ENCODE measurements at regions of chr20 and their contacts with region 1.

Region 1: DNA sequence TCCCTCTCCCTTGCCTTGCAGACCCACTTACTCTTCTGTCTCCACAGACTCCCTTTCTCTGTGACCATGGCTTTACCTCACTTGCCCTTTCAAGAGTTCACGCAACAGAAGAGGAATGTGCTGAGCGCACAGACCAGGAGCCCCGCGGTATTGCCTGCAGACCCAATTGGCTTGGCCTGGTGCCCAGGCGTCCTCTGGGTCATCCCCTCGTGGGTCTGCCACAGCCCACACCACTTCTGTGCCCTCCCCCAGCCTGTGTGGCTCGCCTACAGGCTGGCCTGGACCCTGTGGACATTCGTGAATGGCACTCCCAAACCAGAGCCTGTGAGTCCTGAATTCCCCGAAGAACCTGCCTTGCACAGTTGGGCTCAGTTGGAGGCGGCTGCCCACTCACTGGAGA is 15.3 kb upstream of the NINL start:
- DNase-seq: no peak
- H3K4me3 ChIP-seq: no peak overlapping the region
- H3K27ac ChIP-seq: no peak overlapping the region
- H3K27me3 ChIP-seq: no peaks in the 10 kb centered on the region
- CTCF ChIP-seq: no peak

Region 2: GRCh38 chr20:24584538-24585356 is 1015.9 kb before region 1 on chr20:
- intact Hi-C with region 1: loop called in 1 of 2 experiments (anchors 10 kb)
- DNase-seq: peak in 1 of 10 donors; percentile 47
- H3K4me3 ChIP-seq: no peak overlapping the region
- H3K27ac ChIP-seq: peak overlapping the region in 26 of 59 donors; percentile 8 to 76 (median 52)
- H3K27me3 ChIP-seq: no peaks in the 10 kb centered on the region
- CTCF ChIP-seq: no peak

Region 3: GRCh38 chr20:25453035-25453810 is 147.4 kb before region 1 on chr20:
- intact Hi-C with region 1: loop called in 1 of 2 experiments (anchors 10 kb)
- DNase-seq: peak in 1 of 10 donors; percentile 20
- H3K4me3 ChIP-seq: no peak overlapping the region
- H3K27ac ChIP-seq: no peak overlapping the region
- H3K27me3 ChIP-seq: no peaks in the 10 kb centered on the region
- CTCF ChIP-seq: no peak

Measured in dorsolateral prefrontal cortex (tissue), 120 donors.